ENCODE measurements at regions of chr7 and their contacts with region 1.

Region 1: GRCh38 chr7:106588422-106589198 is 72.3 kb downstream of the CCDC71L start:
- DNase-seq: no peak
- H3K4me3 ChIP-seq: no peak overlapping the region
- H3K27ac ChIP-seq: peak overlapping the region; percentile 89
- H3K4me1 ChIP-seq: peaks cover 30% of the 10 kb centered on the region
- H3K27me3 ChIP-seq: no peaks in the 10 kb centered on the region
- CTCF ChIP-seq: no peak
- POLR2A ChIP-seq: no peak

Region 2: DNA sequence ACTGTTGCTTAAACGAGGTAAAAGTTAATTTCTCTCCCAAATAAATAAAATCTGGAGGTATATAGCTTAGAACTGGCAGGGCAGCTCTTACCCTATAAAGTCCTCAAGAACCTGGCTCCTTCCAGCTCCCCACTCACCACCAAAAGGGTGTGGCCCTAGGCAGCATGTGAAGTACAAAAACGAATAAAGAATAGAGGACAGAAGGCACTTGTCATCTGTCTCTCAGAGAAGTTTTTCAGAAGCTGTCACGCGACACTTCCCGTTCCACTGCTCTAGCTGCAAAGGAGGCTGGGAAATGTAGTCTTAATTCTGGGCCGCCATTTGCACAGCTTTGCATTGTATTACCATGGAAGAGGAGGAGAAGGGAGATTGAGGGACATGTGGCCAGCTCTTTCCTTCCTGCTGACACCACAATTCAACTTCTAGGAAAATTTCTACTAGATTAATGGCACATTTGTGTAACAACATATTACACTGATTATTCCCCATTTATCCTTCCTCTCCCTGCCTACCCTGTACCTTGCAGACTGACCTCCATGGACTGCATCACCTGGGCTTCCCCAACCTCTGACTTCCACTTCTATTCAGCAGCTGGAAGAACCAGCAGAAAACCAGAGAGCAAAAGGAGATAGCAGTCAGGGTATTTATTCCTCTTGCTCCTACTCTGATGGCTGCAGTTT is 10.2 kb after region 1 on chr7:
- CTCF ChIA-PET with region 1: interaction called, 12 read pairs
- POLR2A ChIA-PET with region 1: interaction called, 3 read pairs
- dilution Hi-C with region 1: no loop called
- intact Hi-C with region 1: no loop called
- DNase-seq: peak; percentile 87
- H3K4me3 ChIP-seq: peak overlapping the region in 2 of 3 experiments; percentile 29 to 43
- H3K27ac ChIP-seq: peak overlapping the region; percentile 41
- H3K4me1 ChIP-seq: peaks cover 3% of the 10 kb centered on the region
- H3K27me3 ChIP-seq: no peaks in the 10 kb centered on the region
- CTCF ChIP-seq: no peak
- POLR2A ChIP-seq: peak; percentile 32

Region 3: GRCh38 chr7:106609416-106609815 is 20.8 kb after region 1 on chr7:
- CTCF ChIA-PET with region 1: interaction called, 3 read pairs
- POLR2A ChIA-PET with region 1: no interaction called
- dilution Hi-C with region 1: no loop called
- intact Hi-C with region 1: loop called (anchors 1 kb)
- DNase-seq: peak; percentile 88
- H3K4me3 ChIP-seq: no peak overlapping the region
- H3K27ac ChIP-seq: peak overlapping the region; percentile 88
- H3K4me1 ChIP-seq: peaks cover 20% of the 10 kb centered on the region
- H3K27me3 ChIP-seq: no peaks in the 10 kb centered on the region
- CTCF ChIP-seq: no peak
- POLR2A ChIP-seq: no peak

Region 4: GRCh38 chr7:106644999-106645398 is 56.4 kb after region 1 on chr7:
- CTCF ChIA-PET with region 1: no interaction called
- POLR2A ChIA-PET with region 1: interaction called, 5 read pairs
- dilution Hi-C with region 1: no loop called
- intact Hi-C with region 1: loop called (anchors 5 kb)
- DNase-seq: no peak
- H3K4me3 ChIP-seq: no peak overlapping the region
- H3K27ac ChIP-seq: no peak overlapping the region
- H3K4me1 ChIP-seq: peaks cover 12% of the 10 kb centered on the region
- H3K27me3 ChIP-seq: no peaks in the 10 kb centered on the region
- CTCF ChIP-seq: no peak
- POLR2A ChIP-seq: no peak

Region 5: DNA sequence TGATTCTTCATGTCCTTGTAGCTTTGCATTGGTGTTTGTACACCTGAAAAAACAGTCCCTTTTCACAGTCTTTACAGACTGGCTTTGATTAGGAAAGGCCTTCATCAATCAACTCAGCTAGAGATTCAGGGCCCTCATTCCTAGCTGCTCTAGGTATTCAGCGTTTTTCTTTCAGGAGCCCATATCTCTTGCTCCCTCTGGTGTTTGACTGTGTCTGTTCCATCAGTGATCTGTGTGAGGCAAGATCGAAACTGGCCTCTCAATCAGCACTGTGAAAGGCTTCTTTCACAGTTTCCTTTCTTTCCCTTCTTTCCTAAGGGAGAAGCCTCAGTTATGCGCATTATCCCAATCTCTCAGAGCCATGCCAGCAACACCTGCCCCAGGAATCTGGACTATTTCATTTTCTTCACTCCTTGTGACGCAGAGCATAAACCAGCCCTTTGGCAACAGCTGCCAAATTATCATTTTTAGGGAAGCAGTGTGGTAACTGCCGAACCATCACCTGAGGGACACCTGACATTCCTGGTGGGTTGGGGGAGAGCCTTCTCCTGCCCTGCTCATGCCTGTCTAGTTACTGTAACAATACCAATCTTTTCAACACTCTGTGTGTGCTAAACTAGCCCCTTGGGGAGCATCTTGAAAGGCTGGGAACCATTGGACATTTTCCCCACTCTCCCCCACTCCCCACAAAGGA is 148.0 kb after region 1 on chr7:
- CTCF ChIA-PET with region 1: interaction called, 10 read pairs
- POLR2A ChIA-PET with region 1: no interaction called
- dilution Hi-C with region 1: no loop called
- intact Hi-C with region 1: no loop called
- DNase-seq: peak; percentile 84
- H3K4me3 ChIP-seq: no peak overlapping the region
- H3K27ac ChIP-seq: peak overlapping the region; percentile 37
- H3K4me1 ChIP-seq: peaks cover 18% of the 10 kb centered on the region
- H3K27me3 ChIP-seq: no peaks in the 10 kb centered on the region
- CTCF ChIP-seq: peak; percentile 65 to 74
- POLR2A ChIP-seq: no peak